ENCODE measurements at regions of chr16 and their contacts with region 1.

Region 1: DNA sequence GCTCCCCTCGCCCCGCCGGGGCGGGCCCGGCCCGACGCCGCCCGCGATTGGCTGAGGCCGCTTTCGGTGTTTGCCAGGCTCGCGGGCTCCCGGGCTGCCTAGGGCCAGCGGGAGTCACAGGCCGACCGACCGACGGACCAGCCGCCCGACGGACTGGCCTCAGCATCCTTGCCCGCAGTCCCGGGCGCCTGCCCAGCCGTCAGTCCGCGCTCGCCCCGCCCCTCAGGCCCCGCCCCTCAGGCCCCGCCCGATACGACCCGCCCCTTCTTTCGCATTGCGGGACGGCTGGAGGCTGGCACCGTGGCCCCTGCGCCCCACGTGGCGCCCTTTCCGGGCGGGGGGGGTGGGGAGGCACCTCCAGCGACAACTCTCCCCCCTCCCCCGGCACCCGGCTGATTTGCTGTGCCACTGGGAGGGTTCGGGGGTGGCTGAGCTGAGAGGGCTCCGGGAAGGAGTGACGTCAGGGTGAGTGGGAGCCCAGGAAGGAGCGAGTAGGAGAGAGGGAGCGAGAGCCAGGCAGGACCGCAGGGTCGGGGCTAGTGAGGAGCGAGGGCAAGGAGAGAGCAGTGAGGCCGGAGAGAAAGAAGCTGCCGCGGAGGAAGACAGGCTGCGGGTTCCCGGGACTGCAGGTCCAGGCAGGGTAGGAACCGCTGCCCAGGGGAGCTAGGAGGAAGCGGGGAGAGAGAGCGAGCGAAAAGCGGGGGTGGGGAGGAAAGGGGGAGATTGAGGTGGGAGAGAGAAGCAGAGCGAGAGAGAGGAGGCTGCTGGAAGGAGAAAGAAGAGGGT is at the start of gene ASPHD1:
- DNase-seq: peak; percentile 95
- H3K4me3 Mint-ChIP-seq: peak within 1 kb of the TSS; percentile 89
- H3K27ac Mint-ChIP-seq: peak within 1 kb of the TSS; percentile 95
- H3K4me1 Mint-ChIP-seq: peaks cover 24% of the 10 kb centered on the region
- H3K27me3 Mint-ChIP-seq: no peaks in the 10 kb centered on the region
- CTCF ChIP-seq: no peak
- total RNA-seq, gene ASPHD1: 54.1 and 64.1 TPM in 2 replicates

Region 2: DNA sequence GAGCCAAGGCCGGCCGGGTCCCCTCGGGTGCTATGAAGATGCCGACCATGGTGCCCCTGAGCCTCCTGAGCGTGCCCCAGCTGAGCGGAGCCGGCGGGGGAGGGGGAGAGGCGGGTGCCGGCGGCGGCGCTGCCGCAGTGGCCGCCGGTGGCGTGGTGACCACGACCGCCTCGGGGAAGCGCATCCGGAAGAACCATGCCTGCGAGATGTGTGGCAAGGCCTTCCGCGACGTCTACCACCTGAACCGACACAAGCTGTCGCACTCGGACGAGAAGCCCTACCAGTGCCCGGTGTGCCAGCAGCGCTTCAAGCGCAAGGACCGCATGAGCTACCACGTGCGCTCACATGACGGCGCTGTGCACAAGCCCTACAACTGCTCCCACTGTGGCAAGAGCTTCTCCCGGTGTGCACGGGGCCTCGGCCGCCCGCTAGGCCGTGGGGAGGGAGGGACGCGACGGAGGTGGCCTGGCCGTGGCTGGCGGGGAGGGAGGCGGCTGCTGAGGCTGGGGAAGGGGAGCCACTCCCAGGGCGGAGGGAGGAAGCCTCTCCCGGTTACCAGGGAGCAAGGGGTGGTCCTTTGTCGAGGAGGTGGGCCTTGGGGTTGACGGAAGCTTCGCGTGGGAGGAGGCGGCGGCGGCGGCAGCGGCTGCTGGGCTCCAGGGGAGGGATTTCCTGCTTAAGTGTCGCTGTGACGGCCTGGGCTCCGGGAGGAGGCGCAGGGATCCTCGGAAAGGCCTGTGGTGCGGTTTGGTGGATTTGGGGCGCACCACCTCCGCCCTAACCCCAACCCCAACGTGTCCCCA is 92.7 kb before region 1 on chr16:
- CTCF ChIA-PET with region 1: interaction called, 11 read pairs
- intact Hi-C with region 1: no loop called
- DNase-seq: peak; percentile 91
- H3K4me3 Mint-ChIP-seq: peak overlapping the region; percentile 72
- H3K27ac Mint-ChIP-seq: peak overlapping the region; percentile 96
- H3K4me1 Mint-ChIP-seq: peaks cover 34% of the 10 kb centered on the region
- H3K27me3 Mint-ChIP-seq: peaks cover 11% of the 10 kb centered on the region
- CTCF ChIP-seq: peak; percentile 30

Region 3: GRCh38 chr16:29848420-29849297 is 51.6 kb before region 1 on chr16:
- CTCF ChIA-PET with region 1: interaction called, 13 read pairs
- intact Hi-C with region 1: no loop called
- DNase-seq: peak; percentile 85
- H3K4me3 Mint-ChIP-seq: no peak overlapping the region
- H3K27ac Mint-ChIP-seq: peak overlapping the region; percentile 65
- H3K4me1 Mint-ChIP-seq: no peaks in the 10 kb centered on the region
- H3K27me3 Mint-ChIP-seq: no peaks in the 10 kb centered on the region
- CTCF ChIP-seq: peak; percentile 90

Region 4: GRCh38 chr16:29915590-29916247 is 15.4 kb after region 1 on chr16:
- CTCF ChIA-PET with region 1: interaction called, 6 read pairs
- intact Hi-C with region 1: loop called (anchors 2 kb)
- DNase-seq: no peak
- H3K4me3 Mint-ChIP-seq: peak overlapping the region; percentile 12
- H3K27ac Mint-ChIP-seq: peak overlapping the region; percentile 42
- H3K4me1 Mint-ChIP-seq: peaks cover 42% of the 10 kb centered on the region
- H3K27me3 Mint-ChIP-seq: no peaks in the 10 kb centered on the region
- CTCF ChIP-seq: no peak

Region 5: GRCh38 chr16:30005341-30006094 is 105.2 kb after region 1 on chr16:
- CTCF ChIA-PET with region 1: no interaction called
- intact Hi-C with region 1: loop called (anchors 2 kb)
- DNase-seq: peak; percentile 69
- H3K4me3 Mint-ChIP-seq: no peak overlapping the region
- H3K27ac Mint-ChIP-seq: no peak overlapping the region
- H3K4me1 Mint-ChIP-seq: peaks cover 6% of the 10 kb centered on the region
- H3K27me3 Mint-ChIP-seq: peaks cover 8% of the 10 kb centered on the region
- CTCF ChIP-seq: peak; percentile 87

Region 6: DNA sequence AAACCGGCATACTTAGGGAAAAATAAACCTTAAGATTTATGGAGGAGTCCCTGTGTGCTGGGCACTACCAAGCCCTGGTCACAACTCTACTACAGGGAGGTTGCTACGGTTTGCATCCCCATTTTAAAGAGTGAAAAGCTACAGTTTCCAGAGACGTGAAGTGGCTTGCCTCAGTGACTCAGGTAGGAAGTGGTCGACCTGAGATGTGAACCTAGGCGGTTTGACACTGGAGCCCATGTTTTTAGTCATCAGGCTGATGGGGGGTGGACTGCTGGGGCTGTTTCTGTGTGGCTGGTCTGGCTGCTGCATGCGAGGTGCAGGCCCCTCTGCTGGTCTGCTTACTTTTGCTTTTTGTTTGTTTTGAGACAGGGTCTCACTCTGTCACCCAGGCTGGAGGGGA is 1521.3 kb after region 1 on chr16:
- CTCF ChIA-PET with region 1: interaction called, 10 read pairs
- intact Hi-C with region 1: no loop called
- DNase-seq: no peak
- H3K4me3 Mint-ChIP-seq: no peak overlapping the region
- H3K27ac Mint-ChIP-seq: no peak overlapping the region
- H3K4me1 Mint-ChIP-seq: no peaks in the 10 kb centered on the region
- H3K27me3 Mint-ChIP-seq: peaks cover 51% of the 10 kb centered on the region
- CTCF ChIP-seq: no peak

Measured in Calu3 (cell line).